Heart left ventricle (tissue), 16 donors: ENCODE measurements at regions of chr9 and their contacts with region 1.

Region 1: DNA sequence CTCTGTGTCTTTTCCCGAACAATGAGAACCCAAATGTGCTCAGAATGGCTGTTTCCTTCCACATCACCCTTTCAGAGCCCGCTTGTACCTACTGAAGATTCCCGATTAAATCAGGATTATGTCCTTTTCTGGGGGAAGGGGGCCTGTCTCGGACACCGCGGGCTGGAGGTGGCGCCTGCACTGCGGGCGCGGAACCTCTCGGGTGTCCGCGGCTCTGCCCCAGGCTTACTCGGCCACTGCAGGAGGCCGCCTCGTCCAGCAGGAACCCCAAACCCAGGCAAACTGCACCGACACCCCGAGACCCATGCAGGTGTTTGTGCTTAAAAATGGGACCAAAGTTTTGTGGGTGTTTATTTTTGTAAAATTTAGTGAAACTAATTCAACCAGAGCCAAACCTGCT is 8.6 kb upstream of the TMEM250 start:
- DNase-seq: peak in 1 of 5 donors; percentile 60
- ATAC-seq: no peak
- H3K4me3 ChIP-seq: no peak overlapping the region
- H3K27ac ChIP-seq: no peak overlapping the region
- H3K4me1 ChIP-seq: peaks cover 0 to 14% (median 8%) of the 10 kb centered on the region in 12 donors
- H3K27me3 ChIP-seq: peaks cover 0 to 22% (median 8%) of the 10 kb centered on the region in 9 donors
- CTCF ChIP-seq: no peak
- POLR2A ChIP-seq: no peak

Region 2: DNA sequence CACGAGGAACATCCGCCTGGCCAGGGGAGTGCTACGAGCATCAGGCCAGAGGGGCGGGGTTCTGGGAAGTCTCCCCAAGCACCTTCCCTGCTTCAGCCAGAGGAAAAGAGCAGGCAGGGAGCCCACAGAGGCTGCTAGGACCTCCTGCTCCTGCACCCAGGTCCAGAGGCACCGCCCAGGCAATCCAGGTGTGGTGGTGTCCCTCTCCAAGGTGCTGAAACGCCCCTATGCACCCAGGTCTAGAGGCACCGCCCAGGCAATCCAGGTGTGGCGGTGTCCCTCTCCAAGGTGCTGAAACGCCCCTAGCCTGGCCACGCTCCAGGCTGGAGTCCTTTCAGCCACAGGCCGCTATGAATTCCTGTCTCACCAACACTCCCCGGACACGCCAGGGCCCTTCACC is 155.4 kb before region 1 on chr9:
- intact Hi-C with region 1: loop called (anchors 1 to 2 kb)
- DNase-seq: no peak
- ATAC-seq: no peak
- H3K4me3 ChIP-seq: no peak overlapping the region
- H3K27ac ChIP-seq: no peak overlapping the region
- H3K4me1 ChIP-seq: peaks cover 0 to 37% (median 13%) of the 10 kb centered on the region in 12 donors
- H3K27me3 ChIP-seq: peaks cover 0 to 3% (median 0%) of the 10 kb centered on the region in 9 donors
- CTCF ChIP-seq: no peak
- POLR2A ChIP-seq: no peak

Region 3: DNA sequence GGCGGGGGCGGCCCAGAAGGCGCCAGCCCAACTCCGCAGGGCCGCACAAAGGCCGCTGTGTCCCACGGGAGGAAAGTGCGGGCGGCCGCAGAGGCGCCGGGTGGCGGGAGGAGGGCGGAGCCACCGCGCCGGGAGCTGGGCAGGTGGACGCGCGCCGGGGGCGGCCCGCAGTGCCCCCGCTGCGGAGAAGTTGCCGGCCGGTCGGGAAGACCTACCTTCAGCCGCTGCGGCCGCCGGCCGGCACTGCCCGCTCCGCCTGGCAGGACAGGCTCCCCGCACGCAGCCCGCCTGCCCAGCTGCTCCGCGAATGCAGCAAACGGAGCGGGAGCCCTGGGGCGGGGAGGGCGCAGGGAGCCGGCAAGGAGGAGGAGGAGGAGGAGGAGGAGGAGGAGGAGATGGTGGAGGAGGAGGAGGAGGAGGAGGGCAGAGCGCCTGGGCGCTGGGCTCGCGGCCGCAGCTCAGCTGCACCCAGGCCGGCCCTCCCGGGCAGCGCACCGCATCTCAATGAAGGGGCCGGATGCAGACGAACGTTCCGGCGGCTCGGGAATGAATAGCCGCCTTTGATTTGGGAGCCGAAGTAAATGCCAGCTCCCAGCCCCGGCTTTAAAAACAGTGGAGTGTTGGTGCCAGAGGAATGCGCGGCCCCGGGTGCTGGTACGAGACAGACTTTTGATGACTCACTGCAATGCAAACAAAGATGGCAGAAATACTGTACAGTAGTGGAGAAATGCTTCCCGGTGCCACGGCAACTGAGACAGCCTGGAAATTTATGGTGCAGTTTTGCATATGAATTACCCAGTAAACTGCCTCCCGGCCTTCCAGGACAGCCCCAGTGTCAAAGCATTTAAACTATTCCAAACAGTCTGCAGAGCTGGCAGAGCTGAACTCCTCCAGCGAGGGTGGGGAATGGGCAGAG is 75.5 kb before region 1 on chr9:
- intact Hi-C with region 1: no loop called
- DNase-seq: peak in 4 of 5 donors; percentile 57 to 72 (median 62)
- ATAC-seq: peak; percentile 24 to 66 (median 37)
- H3K4me3 ChIP-seq: peak overlapping the region; percentile 29 to 63 (median 53)
- H3K27ac ChIP-seq: peak overlapping the region; percentile 32 to 88 (median 80)
- H3K4me1 ChIP-seq: peaks cover 6 to 85% (median 60%) of the 10 kb centered on the region in 12 donors
- H3K27me3 ChIP-seq: no peaks in the 10 kb centered on the region
- CTCF ChIP-seq: no peak
- POLR2A ChIP-seq: no peak

Region 4: GRCh38 chr9:136255166-136255538 is 127.8 kb after region 1 on chr9:
- intact Hi-C with region 1: no loop called
- DNase-seq: no peak
- ATAC-seq: peak in 1 of 4 donors; percentile 45
- H3K4me3 ChIP-seq: no peak overlapping the region
- H3K27ac ChIP-seq: no peak overlapping the region
- H3K4me1 ChIP-seq: peaks cover 0 to 12% (median 0%) of the 10 kb centered on the region in 12 donors
- H3K27me3 ChIP-seq: peaks cover 0 to 5% (median 0%) of the 10 kb centered on the region in 9 donors
- CTCF ChIP-seq: no peak
- POLR2A ChIP-seq: no peak